ENCODE measurements at regions of chr1 and their contacts with region 1.

Region 1: GRCh38 chr1:110034451-110035235 is at the start of gene STRIP1:
- DNase-seq: peak; percentile 78 to 96 (median 93)
- ATAC-seq: peak; percentile 97
- H3K4me3 ChIP-seq: peak within 1 kb of the TSS; percentile 48
- H3K4me3 Mint-ChIP-seq: peak within 1 kb of the TSS; percentile 92 to 98 (median 95)
- H3K27ac ChIP-seq: peak within 1 kb of the TSS; percentile 97
- H3K27ac Mint-ChIP-seq: peak within 1 kb of the TSS; percentile 81 to 98 (median 95)
- H3K4me1 ChIP-seq: peaks cover 31% of the 10 kb centered on the region in 2 donors
- H3K4me1 Mint-ChIP-seq: peaks cover 32 to 70% (median 57%) of the 10 kb centered on the region in 7 donors
- H3K27me3 ChIP-seq: no peaks in the 10 kb centered on the region
- H3K27me3 Mint-ChIP-seq: no peaks in the 10 kb centered on the region
- total RNA-seq, gene STRIP1: 42.4 to 83.9 (median 70.7) TPM

Region 2: DNA sequence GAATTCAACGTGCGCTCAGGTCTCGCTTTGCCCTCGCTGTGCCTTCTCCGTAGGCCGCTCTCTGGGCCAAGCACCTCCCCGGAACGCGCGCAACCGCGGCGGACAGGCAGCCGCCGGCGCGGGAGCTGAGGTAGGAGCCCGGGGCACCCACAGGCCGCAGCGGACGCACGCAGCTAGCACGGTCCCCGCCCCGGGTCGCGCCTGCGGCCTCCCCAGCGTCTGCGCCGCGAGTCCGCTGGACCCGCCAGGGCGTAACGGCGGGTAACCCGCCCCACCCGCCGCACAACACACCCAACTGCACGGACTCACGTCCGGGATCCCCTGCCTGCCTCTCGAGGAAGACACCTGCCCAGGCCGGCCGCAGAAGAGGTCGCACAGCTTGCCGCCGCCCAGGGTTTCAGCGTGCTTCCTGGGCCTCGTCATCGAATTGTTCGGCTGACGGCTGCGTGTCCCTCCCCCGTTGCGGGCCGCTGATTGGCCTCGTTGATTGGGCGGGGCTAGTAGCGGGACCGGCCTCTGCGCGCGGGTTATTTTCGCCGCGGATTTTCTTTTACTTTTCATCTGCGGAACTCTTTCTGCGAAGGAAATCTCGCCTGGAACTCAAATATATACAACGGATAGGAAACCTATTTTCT is 1071.5 kb before region 1 on chr1 and contains the start of gene CLCC1:
- CTCF ChIA-PET with region 1: no interaction called
- POLR2A ChIA-PET with region 1: interaction called, 5 read pairs
- intact Hi-C with region 1: loop called (anchors 5 to 10 kb)
- DNase-seq: peak; percentile 78 to 92 (median 89)
- ATAC-seq: peak; percentile 97
- H3K4me3 ChIP-seq: peak within 1 kb of the TSS; percentile 76
- H3K4me3 Mint-ChIP-seq: peak within 1 kb of the TSS; percentile 87 to 94 (median 90)
- H3K27ac ChIP-seq: peak within 1 kb of the TSS; percentile 85
- H3K27ac Mint-ChIP-seq: peak within 1 kb of the TSS; percentile 78 to 97 (median 92)
- H3K4me1 ChIP-seq: peaks cover 11 to 16% of the 10 kb centered on the region in 2 donors
- H3K4me1 Mint-ChIP-seq: peaks cover 21 to 48% (median 37%) of the 10 kb centered on the region in 7 donors
- H3K27me3 ChIP-seq: no peaks in the 10 kb centered on the region
- H3K27me3 Mint-ChIP-seq: peaks cover 0 to 15% (median 0%) of the 10 kb centered on the region in 5 donors
- total RNA-seq, gene CLCC1: 15.4 to 34.6 (median 25.2) TPM

Region 3: DNA sequence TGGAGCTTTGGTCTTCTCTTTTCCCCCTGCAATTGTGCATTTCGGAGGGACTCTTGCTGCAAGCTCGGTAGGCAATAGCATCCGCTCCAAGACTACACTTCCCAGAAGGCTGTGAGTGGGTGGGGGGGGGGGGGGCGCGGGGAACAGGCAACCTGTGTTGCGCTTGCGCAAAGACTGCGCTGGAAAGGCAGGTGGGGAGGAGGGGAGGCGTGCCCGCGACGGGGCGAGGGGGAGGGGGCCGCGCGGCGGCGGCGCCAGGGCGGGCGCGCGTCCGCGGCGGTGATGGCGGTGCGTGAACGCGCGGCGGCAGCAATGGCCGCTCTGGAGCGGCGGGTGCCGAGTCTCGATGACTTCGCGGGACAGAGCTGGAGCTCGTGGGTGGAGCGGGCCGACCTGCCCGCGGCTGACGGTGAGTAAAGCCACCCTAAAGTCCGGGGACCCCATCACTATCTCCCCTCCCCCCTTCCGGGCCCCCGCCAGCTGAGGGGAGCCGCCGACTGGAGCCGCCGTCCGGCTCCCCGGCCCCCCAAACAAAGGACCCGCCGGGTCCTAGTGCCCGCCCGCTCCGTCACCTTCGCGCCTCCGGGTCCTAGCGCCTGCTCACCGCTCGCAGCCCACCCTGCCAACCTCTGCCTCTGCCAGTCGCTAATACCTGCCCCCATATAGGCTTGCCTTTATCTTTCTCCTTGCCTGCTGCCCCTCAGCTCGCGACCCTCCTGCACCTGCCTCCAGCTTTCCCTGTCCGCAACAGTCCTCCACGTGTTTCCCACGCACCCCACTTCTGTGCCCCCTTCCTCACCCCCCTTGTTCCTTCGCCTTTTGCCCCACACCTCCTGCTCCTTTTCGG is 550.7 kb before region 1 on chr1 and contains the start of gene ATXN7L2:
- CTCF ChIA-PET with region 1: interaction called, 3 read pairs
- POLR2A ChIA-PET with region 1: no interaction called
- intact Hi-C with region 1: loop called in 1 of 2 experiments (anchors 1 kb)
- DNase-seq: peak; percentile 89 to 95 (median 93)
- ATAC-seq: peak; percentile 91
- H3K4me3 ChIP-seq: peak within 1 kb of the TSS; percentile 98
- H3K4me3 Mint-ChIP-seq: peak within 1 kb of the TSS; percentile 93 to 99 (median 96)
- H3K27ac ChIP-seq: peak within 1 kb of the TSS; percentile 88
- H3K27ac Mint-ChIP-seq: peak within 1 kb of the TSS; percentile 83 to 97 (median 92)
- H3K4me1 ChIP-seq: peaks cover 9 to 14% of the 10 kb centered on the region in 2 donors
- H3K4me1 Mint-ChIP-seq: peaks cover 27 to 44% (median 35%) of the 10 kb centered on the region in 7 donors
- H3K27me3 ChIP-seq: no peaks in the 10 kb centered on the region
- H3K27me3 Mint-ChIP-seq: peaks cover 0 to 23% (median under 1%) of the 10 kb centered on the region in 5 donors
- total RNA-seq, gene ATXN7L2: 10.5 to 12.8 (median 11.7) TPM

Region 4: GRCh38 chr1:109984456-109985275 is 50.0 kb before region 1 on chr1 and contains the start of gene AHCYL1:
- CTCF ChIA-PET with region 1: interaction called, 4 read pairs
- POLR2A ChIA-PET with region 1: interaction called, 8 read pairs
- intact Hi-C with region 1: loop called (anchors 1 kb)
- DNase-seq: peak; percentile 97 to 99 (median 99)
- ATAC-seq: peak; percentile 99
- H3K4me3 ChIP-seq: peak within 1 kb of the TSS; percentile 72
- H3K4me3 Mint-ChIP-seq: peak within 1 kb of the TSS; percentile 87 to 100 (median 97)
- H3K27ac ChIP-seq: peak within 1 kb of the TSS; percentile 92
- H3K27ac Mint-ChIP-seq: peak within 1 kb of the TSS; percentile 94 to 99 (median 98)
- H3K4me1 ChIP-seq: peaks cover 22 to 24% of the 10 kb centered on the region in 2 donors
- H3K4me1 Mint-ChIP-seq: peaks cover 22 to 49% (median 42%) of the 10 kb centered on the region in 7 donors
- H3K27me3 ChIP-seq: no peaks in the 10 kb centered on the region
- H3K27me3 Mint-ChIP-seq: peaks cover 0 to 6% (median 0%) of the 10 kb centered on the region in 5 donors
- total RNA-seq, gene AHCYL1: 16.6 to 60.1 (median 37.1) TPM

Region 5: DNA sequence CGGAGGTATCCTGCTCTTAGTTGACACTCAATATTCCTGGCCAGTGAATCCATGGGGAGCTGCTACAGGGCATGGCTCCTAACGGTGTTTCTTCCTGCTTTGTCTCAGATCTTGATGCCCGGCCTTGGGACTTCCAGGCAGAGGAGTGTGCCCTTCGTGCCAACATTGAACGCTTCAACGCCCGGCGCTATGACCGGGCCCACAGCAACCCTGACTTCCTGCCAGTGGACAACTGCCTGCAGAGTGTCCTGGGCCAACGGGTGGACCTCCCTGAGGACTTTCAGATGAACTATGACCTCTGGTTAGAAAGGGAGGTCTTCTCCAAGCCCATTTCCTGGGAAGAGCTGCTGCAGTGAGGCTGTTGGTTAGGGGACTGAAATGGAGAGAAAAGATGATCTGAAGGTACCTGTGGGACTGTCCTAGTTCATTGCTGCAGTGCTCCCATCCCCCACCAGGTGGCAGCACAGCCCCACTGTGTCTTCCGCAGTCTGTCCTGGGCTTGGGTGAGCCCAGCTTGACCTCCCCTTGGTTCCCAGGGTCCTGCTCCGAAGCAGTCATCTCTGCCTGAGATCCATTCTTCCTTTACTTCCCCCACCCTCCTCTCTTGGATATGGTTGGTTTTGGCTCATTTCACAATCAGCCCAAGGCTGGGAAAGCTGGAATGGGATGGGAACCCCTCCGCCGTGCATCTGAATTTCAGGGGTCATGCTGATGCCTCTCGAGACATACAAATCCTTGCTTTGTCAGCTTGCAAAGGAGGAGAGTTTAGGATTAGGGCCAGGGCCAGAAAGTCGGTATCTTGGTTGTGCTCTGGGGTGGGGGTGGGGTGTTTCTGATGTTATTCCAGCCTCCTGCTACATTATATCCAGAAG is 19.1 kb after region 1 on chr1:
- CTCF ChIA-PET with region 1: interaction called, 10 read pairs
- POLR2A ChIA-PET with region 1: interaction called, 3 read pairs
- intact Hi-C with region 1: loop called in 1 of 2 experiments (anchors 2 kb)
- DNase-seq: peak; percentile 24 to 76 (median 58)
- ATAC-seq: peak; percentile 87
- H3K4me3 ChIP-seq: no peak overlapping the region
- H3K4me3 Mint-ChIP-seq: no peak overlapping the region
- H3K27ac ChIP-seq: no peak overlapping the region
- H3K27ac Mint-ChIP-seq: peak overlapping the region in 1 of 9 donors; percentile 43
- H3K4me1 ChIP-seq: no peaks in the 10 kb centered on the region
- H3K4me1 Mint-ChIP-seq: peaks cover 0 to 11% (median under 1%) of the 10 kb centered on the region in 7 donors
- H3K27me3 ChIP-seq: no peaks in the 10 kb centered on the region
- H3K27me3 Mint-ChIP-seq: no peaks in the 10 kb centered on the region

Region 6: GRCh38 chr1:110209715-110210603 is 175.3 kb after region 1 on chr1 and contains the start of gene KCNC4:
- CTCF ChIA-PET with region 1: no interaction called
- POLR2A ChIA-PET with region 1: interaction called, 6 read pairs
- intact Hi-C with region 1: loop called (anchors 1 to 5 kb)
- DNase-seq: peak; percentile 80 to 93 (median 91)
- ATAC-seq: peak; percentile 93
- H3K4me3 ChIP-seq: peak within 1 kb of the TSS; percentile 72
- H3K4me3 Mint-ChIP-seq: peak within 1 kb of the TSS; percentile 86 to 94 (median 88)
- H3K27ac ChIP-seq: peak within 1 kb of the TSS; percentile 89
- H3K27ac Mint-ChIP-seq: peak within 1 kb of the TSS; percentile 88 to 98 (median 95)
- H3K4me1 ChIP-seq: peaks cover 7 to 20% of the 10 kb centered on the region in 2 donors
- H3K4me1 Mint-ChIP-seq: peaks cover 31 to 61% (median 42%) of the 10 kb centered on the region in 7 donors
- H3K27me3 ChIP-seq: no peaks in the 10 kb centered on the region
- H3K27me3 Mint-ChIP-seq: peaks cover 0 to 16% (median 0%) of the 10 kb centered on the region in 5 donors
- total RNA-seq, gene KCNC4: 5.8 to 18.2 (median 12.4) TPM

Region 7: DNA sequence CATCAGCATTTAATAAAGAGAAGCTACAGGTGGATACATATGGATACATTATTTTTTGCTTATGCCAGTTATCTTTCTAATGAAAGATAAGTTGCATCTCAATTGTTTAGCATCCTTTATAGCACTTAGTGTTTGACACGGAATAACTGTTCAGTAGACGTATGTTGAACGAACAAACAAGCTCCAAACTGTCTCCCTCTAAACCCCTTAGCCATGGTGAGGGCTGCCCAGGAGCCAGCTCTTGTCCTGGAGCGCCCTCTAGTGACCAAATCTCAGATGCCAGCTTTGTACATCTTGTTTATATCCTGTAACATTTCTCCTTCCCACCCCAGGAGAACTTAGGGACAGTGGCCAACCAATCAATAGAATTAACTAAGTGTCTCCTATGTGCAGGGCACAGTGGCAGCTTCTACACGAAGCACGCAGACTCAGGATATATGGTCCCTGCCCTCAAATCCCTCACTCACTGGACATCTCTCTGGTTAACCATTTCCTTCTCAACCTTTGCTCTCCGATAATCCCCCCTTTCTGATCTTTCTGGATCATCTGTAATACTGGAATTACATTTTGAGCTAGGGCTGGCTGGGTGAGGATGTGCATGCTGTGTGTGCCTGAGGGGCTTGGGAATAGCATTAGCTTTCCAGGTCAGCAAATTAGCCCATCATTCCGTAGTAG is 461.4 kb after region 1 on chr1:
- CTCF ChIA-PET with region 1: interaction called, 10 read pairs
- POLR2A ChIA-PET with region 1: no interaction called
- intact Hi-C with region 1: loop called in 1 of 2 experiments (anchors 1 kb)
- DNase-seq: peak; percentile 48 to 76 (median 64)
- ATAC-seq: peak; percentile 88
- H3K4me3 ChIP-seq: no peak overlapping the region
- H3K4me3 Mint-ChIP-seq: no peak overlapping the region
- H3K27ac ChIP-seq: no peak overlapping the region
- H3K27ac Mint-ChIP-seq: no peak overlapping the region
- H3K4me1 ChIP-seq: no peaks in the 10 kb centered on the region
- H3K4me1 Mint-ChIP-seq: peaks cover 0 to 6% (median 0%) of the 10 kb centered on the region in 7 donors
- H3K27me3 ChIP-seq: no peaks in the 10 kb centered on the region
- H3K27me3 Mint-ChIP-seq: no peaks in the 10 kb centered on the region